ENCODE measurements at regions of chr14 and their contacts with region 1.

Region 1: GRCh38 chr14:24971255-24971654 is 78.7 kb downstream of the STXBP6 start:
- DNase-seq: no peak
- ATAC-seq: peak; percentile 37; the same call in 2 of the 3 replicates
- H3K4me3 ChIP-seq: no peak overlapping the region
- H3K27ac ChIP-seq: no peak overlapping the region
- H3K4me1 ChIP-seq: no peaks in the 10 kb centered on the region
- H3K27me3 ChIP-seq: no peaks in the 10 kb centered on the region
- CTCF ChIP-seq: no peak
- EP300 ChIP-seq: no peak
- POLR2A ChIP-seq: no peak
- RAD21 ChIP-seq: no peak

Region 2: GRCh38 chr14:24959791-24960331 is 11.4 kb before region 1 on chr14:
- CTCF ChIA-PET with region 1: interaction called, 6 read pairs
- POLR2A ChIA-PET with region 1: interaction called, 10 read pairs
- RAD21 ChIA-PET with region 1: interaction called, 37 read pairs
- SMC1A ChIA-PET with region 1: interaction called, 390 read pairs
- in situ Hi-C with region 1: no loop called
- intact Hi-C with region 1: no loop called
- DNase-seq: no peak
- ATAC-seq: peak; percentile 77
- H3K4me3 ChIP-seq: no peak overlapping the region
- H3K27ac ChIP-seq: 0 out of 2 replicates have a peak overlapping the region, but pooled peaks have one; percentile 31
- H3K4me1 ChIP-seq: peaks cover under 1% of the 10 kb centered on the region
- H3K27me3 ChIP-seq: no peaks in the 10 kb centered on the region
- CTCF ChIP-seq: no peak
- EP300 ChIP-seq: peak in 1 of 2 experiments; percentile 27; a peak in 1 of 4 replicates
- POLR2A ChIP-seq: no peak
- RAD21 ChIP-seq: no peak

Region 3: GRCh38 chr14:24992624-24993360 is 21.5 kb after region 1 on chr14:
- CTCF ChIA-PET with region 1: interaction called, 5 read pairs
- POLR2A ChIA-PET with region 1: interaction called, 7 read pairs
- RAD21 ChIA-PET with region 1: interaction called, 3 read pairs
- SMC1A ChIA-PET with region 1: interaction called, 390 read pairs
- in situ Hi-C with region 1: no loop called
- intact Hi-C with region 1: no loop called
- DNase-seq: no peak
- ATAC-seq: peak; percentile 69
- H3K4me3 ChIP-seq: no peak overlapping the region
- H3K27ac ChIP-seq: no peak overlapping the region
- H3K4me1 ChIP-seq: no peaks in the 10 kb centered on the region; the same call in 1 of the 2 replicates
- H3K27me3 ChIP-seq: no peaks in the 10 kb centered on the region
- CTCF ChIP-seq: peak in 1 of 3 experiments; percentile 25; a peak in 1 of 6 replicates
- EP300 ChIP-seq: no peak
- POLR2A ChIP-seq: no peak
- RAD21 ChIP-seq: no peak

Measured in GM12878 (cell line).